Activated T-helper 2 cell treated with anti-CD3 and anti-CD28 coated beads, Interferon-gamma antibody, Interleukin-2, Interleukin-4, amounts not matched to agents 10 μg/mL and 5 μg/mL and 100 μg/mL, durations not matched to agents 14 hours and 24 hours and 36 hours (primary cell): ENCODE measurements at regions of chr2 and their contacts with region 1.

Region 1: DNA sequence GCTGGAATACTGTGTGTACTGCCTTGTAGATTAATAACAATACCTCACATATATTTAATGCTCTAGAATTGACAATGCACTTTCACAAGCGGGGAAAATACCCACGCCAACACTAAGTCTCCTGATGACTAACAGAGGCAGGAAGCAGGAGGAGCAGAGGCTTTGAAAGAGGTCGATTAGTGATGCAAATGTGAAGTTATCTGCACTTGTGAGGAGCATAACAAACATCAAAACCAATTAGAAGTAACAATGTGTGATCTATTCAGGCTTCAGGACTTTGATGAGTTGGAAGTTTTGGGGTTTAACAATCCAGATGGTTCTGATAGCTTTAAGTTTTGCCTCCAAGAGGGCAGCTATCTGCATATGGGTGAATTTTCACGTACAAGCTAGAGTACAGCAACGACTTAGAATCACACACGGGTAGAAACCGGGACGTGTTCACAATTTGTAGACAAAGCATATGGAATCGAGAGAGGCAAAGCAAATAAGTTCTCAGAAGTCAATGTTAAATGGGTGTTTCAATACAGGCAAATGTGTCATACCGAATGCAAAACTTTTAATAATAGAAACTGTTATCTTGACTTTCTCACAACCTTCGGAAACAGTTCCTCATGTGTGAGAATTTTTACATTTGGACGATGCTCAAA is 114.5 kb downstream of the METTL8 start:
- DNase-seq: peak; percentile 32
- H3K4me3 Mint-ChIP-seq: peak overlapping the region; percentile 56
- H3K27ac Mint-ChIP-seq: peak overlapping the region; percentile 99
- H3K4me1 Mint-ChIP-seq: peaks cover 56% of the 10 kb centered on the region
- H3K27me3 Mint-ChIP-seq: no peaks in the 10 kb centered on the region

Region 2: DNA sequence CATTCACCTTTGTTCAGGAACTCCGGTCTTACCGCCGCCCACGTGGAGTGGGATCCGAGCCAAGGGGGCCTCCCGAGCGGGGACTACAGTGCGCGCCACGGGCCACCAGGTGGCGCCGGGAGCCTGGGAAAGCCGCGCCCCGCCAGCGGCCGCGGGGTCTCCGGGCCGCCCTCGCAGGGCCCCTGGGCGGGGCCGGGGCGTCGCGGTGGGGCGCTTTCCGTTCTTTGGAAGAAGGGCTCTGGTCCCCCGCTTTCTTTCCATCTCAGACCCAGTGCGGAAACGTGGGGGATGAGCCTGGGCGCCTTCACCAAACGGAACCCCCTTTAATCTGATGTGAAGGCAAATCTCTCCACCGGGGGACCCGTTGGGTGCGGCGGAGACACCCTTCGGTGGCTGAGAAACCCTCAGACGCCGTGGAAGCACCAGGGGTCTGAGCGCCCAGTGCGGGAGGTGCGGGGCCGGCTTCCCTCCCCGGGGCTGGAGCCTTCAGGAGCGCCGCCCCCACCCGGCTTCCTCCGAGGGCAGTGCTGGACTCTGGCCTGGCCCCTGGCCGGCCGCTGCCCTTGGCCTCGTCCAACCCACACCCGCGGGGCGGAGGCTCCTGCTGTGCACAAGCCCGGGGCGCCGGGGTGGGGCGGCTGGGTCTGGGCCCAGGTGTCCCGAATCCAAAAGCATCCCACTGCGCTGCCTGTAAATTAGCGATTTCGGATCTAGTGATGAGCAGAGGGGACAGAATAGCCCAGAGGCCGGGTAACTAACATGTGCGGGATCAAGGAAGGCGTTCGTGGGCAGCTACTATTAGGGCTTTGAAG is 345.6 kb before region 1 on chr2:
- intact Hi-C with region 1: loop called (anchors 2 kb)
- DNase-seq: peak; percentile 75
- H3K4me3 Mint-ChIP-seq: peak overlapping the region; percentile 76
- H3K27ac Mint-ChIP-seq: peak overlapping the region; percentile 63
- H3K4me1 Mint-ChIP-seq: peaks cover 10% of the 10 kb centered on the region
- H3K27me3 Mint-ChIP-seq: no peaks in the 10 kb centered on the region

Region 3: DNA sequence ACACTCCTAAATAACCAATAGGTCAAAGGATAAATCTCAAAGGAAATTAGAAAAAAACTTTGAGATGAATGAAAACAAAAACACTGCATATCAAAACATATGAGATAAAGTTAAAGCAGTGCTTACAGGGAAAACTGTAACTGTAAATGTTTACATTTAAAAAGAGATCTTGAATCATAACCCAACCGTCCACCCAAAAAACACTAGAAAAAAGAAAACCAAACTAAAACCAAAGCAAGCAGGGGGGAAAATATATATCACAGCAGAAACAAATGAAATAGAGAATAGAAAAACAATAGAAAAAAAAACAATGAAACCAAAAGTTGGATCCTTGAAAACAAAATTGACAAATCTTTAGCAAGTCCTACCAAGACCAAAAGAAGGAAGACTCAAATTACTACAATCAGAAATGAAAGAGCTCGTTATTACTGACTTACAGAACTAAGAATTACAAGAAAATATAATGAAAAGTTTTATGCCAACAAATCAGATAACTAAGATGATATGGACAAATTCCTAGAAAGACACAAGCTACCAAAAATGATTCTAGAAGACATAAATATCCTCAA is 224.2 kb before region 1 on chr2:
- intact Hi-C with region 1: loop called (anchors 2 kb)
- DNase-seq: no peak
- H3K4me3 Mint-ChIP-seq: no peak overlapping the region
- H3K27ac Mint-ChIP-seq: peak overlapping the region; percentile 43
- H3K4me1 Mint-ChIP-seq: peaks cover 35% of the 10 kb centered on the region
- H3K27me3 Mint-ChIP-seq: no peaks in the 10 kb centered on the region

Region 4: DNA sequence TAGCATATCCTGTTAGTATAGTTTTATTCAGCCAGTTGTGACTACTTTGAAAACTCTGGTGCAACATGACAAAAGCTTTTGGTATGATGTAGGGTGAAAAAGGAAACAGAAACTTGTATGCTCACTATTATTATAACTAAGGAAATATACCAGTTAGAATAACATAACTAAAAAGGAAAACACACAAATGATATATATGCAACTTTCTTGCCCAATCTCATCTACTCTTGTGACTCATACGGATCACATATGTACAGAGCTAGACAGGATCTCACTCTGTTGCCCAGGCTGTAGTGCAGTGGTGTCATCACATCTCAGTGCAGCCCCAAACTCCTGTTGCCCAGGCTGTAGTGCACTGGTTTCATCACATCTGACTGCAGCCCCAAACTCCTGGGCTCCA is 146.2 kb before region 1 on chr2:
- intact Hi-C with region 1: loop called (anchors 1 kb)
- DNase-seq: no peak
- H3K4me3 Mint-ChIP-seq: no peak overlapping the region
- H3K27ac Mint-ChIP-seq: no peak overlapping the region
- H3K4me1 Mint-ChIP-seq: peaks cover 22% of the 10 kb centered on the region
- H3K27me3 Mint-ChIP-seq: peaks cover 3% of the 10 kb centered on the region

Region 5: GRCh38 chr2:171260471-171261424 is 58.5 kb before region 1 on chr2:
- intact Hi-C with region 1: loop called (anchors 1 kb)
- DNase-seq: no peak
- H3K4me3 Mint-ChIP-seq: no peak overlapping the region
- H3K27ac Mint-ChIP-seq: peak overlapping the region; percentile 51
- H3K4me1 Mint-ChIP-seq: peaks cover 33% of the 10 kb centered on the region
- H3K27me3 Mint-ChIP-seq: peaks cover 2% of the 10 kb centered on the region

Region 6: GRCh38 chr2:171297951-171298350 is 21.3 kb before region 1 on chr2:
- intact Hi-C with region 1: no loop called
- DNase-seq: no peak
- H3K4me3 Mint-ChIP-seq: no peak overlapping the region
- H3K27ac Mint-ChIP-seq: no peak overlapping the region
- H3K4me1 Mint-ChIP-seq: no peaks in the 10 kb centered on the region
- H3K27me3 Mint-ChIP-seq: peaks cover 3% of the 10 kb centered on the region

Region 7: GRCh38 chr2:171416009-171416926 is 97.0 kb after region 1 on chr2:
- intact Hi-C with region 1: loop called (anchors 1 kb)
- DNase-seq: peak; percentile 71
- H3K4me3 Mint-ChIP-seq: peak overlapping the region; percentile 9
- H3K27ac Mint-ChIP-seq: peak overlapping the region; percentile 91
- H3K4me1 Mint-ChIP-seq: peaks cover 34% of the 10 kb centered on the region
- H3K27me3 Mint-ChIP-seq: no peaks in the 10 kb centered on the region

Region 8: DNA sequence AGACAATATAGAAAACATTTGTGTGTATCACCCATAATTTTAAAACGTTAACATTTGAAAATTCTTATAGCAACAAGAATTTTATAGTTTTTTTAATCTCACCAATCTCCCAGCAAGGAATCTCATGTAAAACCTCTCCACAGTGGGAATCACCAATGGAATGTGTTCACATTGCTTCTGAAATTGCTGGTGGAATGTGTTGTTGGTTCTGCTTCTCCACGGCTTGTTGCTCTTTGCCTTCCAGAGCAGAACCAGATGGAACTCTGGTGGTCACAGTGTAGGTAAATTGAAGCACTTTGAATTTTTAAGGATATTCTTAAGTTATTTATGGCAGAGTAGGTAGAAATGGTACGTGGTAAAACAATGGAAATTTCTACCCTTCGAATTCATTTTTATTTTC is 149.9 kb after region 1 on chr2:
- intact Hi-C with region 1: no loop called
- DNase-seq: no peak
- H3K4me3 Mint-ChIP-seq: no peak overlapping the region
- H3K27ac Mint-ChIP-seq: no peak overlapping the region
- H3K4me1 Mint-ChIP-seq: no peaks in the 10 kb centered on the region
- H3K27me3 Mint-ChIP-seq: no peaks in the 10 kb centered on the region